ENCODE measurements at regions of chr11 and their contacts with region 1.

Region 1: GRCh38 chr11:67345920-67346799 is 7.2 kb downstream of the POLD4 start:
- DNase-seq: peak; percentile 99
- ATAC-seq: peak; percentile 92
- H3K4me3 ChIP-seq: peak overlapping the region; percentile 26; the same call in 1 of the 2 replicates
- H3K27ac ChIP-seq: peak overlapping the region; percentile 95
- H3K4me1 ChIP-seq: peaks cover 38% of the 10 kb centered on the region
- H3K27me3 ChIP-seq: no peaks in the 10 kb centered on the region
- CTCF ChIP-seq: peak; percentile 99

Region 2: DNA sequence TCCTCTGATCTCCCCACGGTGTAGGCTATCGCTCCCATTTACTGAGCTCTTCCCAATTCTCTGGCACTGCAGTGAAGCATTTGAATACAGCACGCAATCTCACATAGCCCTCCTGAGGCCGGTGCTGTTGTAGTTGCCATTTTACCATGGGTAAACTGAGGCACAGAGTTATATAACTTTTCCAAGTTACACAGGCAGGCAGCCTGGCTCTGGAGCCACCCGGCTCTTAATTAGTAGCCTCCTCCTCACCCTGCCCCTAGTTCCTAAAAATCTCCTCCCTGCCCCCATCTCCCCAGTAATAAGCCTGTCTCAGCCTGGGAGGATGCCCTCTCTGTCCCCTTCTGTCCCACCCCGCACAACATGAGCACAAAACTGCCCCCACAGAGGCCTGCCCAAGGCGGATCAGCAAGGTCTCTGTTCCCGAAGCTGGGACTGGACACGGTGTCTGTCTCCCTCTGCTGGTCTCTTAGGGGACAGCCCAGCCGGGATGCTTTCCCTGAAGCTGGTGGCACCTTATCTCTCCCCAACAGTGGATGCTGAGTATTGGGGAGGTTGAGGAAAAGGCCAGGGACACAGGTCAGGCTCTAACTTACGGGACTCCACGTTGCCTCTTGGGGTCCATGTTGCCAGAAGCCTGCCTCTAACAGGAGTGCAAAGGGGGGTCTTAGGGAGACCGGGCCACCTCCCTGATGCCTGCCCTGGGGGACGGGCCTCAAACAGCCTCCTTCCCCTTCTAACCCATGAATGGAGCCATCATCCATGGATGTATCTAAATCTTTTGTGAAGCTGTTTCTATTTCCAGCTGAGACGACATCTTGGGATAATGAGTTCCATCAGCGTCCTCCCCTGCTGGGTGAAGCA is 36.3 kb after region 1 on chr11:
- CTCF ChIA-PET with region 1: interaction called, 55 read pairs
- POLR2A ChIA-PET with region 1: interaction called, 4 read pairs
- intact Hi-C with region 1: loop called (anchors 1 kb)
- DNase-seq: peak; percentile 93
- ATAC-seq: peak; percentile 51
- H3K4me3 ChIP-seq: no peak overlapping the region
- H3K27ac ChIP-seq: no peak overlapping the region
- H3K4me1 ChIP-seq: peaks cover 58% of the 10 kb centered on the region
- H3K27me3 ChIP-seq: no peaks in the 10 kb centered on the region
- CTCF ChIP-seq: peak; percentile 99

Region 3: DNA sequence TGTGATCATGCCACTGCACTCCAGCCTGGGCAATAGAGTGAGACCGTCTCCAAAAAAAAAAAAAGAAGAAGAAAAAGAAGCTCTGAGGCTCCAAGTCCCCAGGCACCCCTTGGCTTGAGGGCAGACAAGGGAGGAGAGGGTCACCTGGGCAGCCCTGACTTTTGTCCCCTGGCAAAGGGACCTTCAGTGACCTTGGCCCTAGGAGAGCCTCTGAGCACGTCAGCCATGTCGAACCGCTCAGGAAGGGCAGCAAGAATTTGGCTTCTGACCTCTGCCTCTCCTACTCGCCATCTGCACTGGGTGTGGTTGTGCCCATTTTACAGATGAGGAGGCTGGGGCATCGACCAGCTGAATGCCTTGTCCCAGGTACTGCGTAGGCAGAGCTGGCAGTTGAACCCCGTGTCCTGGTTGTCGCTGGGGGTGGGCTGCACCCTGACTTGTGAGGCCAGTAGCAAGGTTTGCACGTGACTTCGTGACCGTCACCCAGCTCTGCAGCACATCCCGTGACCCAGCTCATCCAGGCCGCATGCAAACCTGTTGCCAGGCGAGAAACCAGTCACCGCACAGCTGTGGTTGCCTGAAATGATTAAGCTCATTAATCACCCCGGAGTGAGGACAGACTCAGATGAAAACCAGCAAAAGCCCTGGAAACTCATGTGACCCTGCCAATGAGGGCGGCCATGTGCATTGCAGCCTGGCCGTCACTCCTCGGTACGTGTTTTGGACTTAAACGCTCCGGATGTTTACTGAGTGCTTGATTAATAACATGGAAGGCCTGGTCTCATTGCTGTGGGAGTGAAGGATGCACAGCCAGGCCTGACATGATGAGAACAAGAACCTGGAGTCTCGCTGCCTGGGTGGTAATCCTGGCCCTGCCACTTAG is 1066.7 kb after region 1 on chr11:
- CTCF ChIA-PET with region 1: no interaction called
- POLR2A ChIA-PET with region 1: no interaction called
- intact Hi-C with region 1: no loop called
- DNase-seq: no peak
- ATAC-seq: no peak
- H3K4me3 ChIP-seq: no peak overlapping the region
- H3K27ac ChIP-seq: no peak overlapping the region
- H3K4me1 ChIP-seq: no peaks in the 10 kb centered on the region
- H3K27me3 ChIP-seq: no peaks in the 10 kb centered on the region
- CTCF ChIP-seq: no peak